Activated CD4-positive, alpha-beta T cell treated with anti-CD3 and anti-CD28 coated beads for 36 hours (primary cell): ENCODE measurements at regions of chr21 and their contacts with region 1.

Region 1: GRCh38 chr21:42227909-42228708 is 9.2 kb downstream of the ABCG1 start:
- DNase-seq: peak; percentile 97
- ATAC-seq: peak; percentile 96
- H3K4me3 Mint-ChIP-seq: peak overlapping the region; percentile 39
- H3K27ac Mint-ChIP-seq: peak overlapping the region; percentile 94
- H3K4me1 Mint-ChIP-seq: peaks cover 80% of the 10 kb centered on the region
- H3K27me3 Mint-ChIP-seq: no peaks in the 10 kb centered on the region

Region 2: GRCh38 chr21:42047821-42048613 is 180.1 kb before region 1 on chr21:
- CTCF ChIA-PET with region 1: no interaction called
- POLR2A ChIA-PET with region 1: no interaction called
- intact Hi-C with region 1: no loop called
- DNase-seq: no peak
- ATAC-seq: no peak
- H3K4me3 Mint-ChIP-seq: no peak overlapping the region
- H3K27ac Mint-ChIP-seq: no peak overlapping the region
- H3K4me1 Mint-ChIP-seq: no peaks in the 10 kb centered on the region
- H3K27me3 Mint-ChIP-seq: no peaks in the 10 kb centered on the region

Region 3: GRCh38 chr21:42187976-42188653 is 40.0 kb before region 1 on chr21:
- CTCF ChIA-PET with region 1: interaction called, 7 read pairs
- POLR2A ChIA-PET with region 1: no interaction called
- intact Hi-C with region 1: loop called (anchors 1 kb)
- DNase-seq: peak; percentile 88
- ATAC-seq: peak; percentile 93
- H3K4me3 Mint-ChIP-seq: peak overlapping the region; percentile 57
- H3K27ac Mint-ChIP-seq: peak overlapping the region; percentile 95
- H3K4me1 Mint-ChIP-seq: peaks cover 65% of the 10 kb centered on the region
- H3K27me3 Mint-ChIP-seq: peaks cover 2% of the 10 kb centered on the region

Region 4: DNA sequence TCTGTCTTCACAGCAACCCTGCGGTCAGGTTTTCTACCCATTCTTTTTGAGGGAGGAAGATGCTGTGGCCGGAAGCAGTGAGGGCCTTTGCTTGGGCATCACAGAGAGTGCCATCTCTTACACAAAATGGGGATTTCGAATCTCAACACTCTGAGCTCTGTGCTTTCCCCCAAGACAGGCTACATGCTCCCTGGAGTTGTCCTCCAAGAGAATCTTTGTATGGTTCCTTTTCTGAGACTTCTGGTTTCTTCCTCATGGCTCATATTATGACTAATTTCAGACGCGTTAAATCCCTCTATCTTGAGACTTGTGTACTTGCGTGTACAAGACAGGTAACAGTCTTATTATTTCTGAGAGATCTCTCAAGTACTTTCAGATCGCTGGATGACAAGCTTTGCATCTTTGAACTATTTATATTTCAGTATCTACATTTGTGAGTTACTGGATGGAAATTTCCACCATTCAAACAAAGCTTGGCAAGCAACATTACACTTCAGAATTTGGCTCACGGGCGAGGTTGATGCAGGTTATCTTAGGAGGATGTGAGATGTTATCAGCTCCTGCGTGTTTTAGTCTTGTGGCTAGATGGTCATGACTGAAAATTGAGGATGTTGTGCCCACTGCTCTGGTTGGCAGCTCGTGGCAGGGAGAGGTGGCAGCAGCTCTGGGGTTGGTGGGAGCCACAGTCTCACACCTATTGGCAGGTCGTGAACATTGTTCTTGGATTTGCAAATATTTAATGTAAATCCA is 10.3 kb after region 1 on chr21:
- CTCF ChIA-PET with region 1: interaction called, 11 read pairs
- POLR2A ChIA-PET with region 1: interaction called, 18 read pairs
- intact Hi-C with region 1: loop called (anchors 1 kb)
- DNase-seq: peak; percentile 61
- ATAC-seq: peak; percentile 7
- H3K4me3 Mint-ChIP-seq: peak overlapping the region; percentile 50
- H3K27ac Mint-ChIP-seq: peak overlapping the region; percentile 92
- H3K4me1 Mint-ChIP-seq: peaks cover 59% of the 10 kb centered on the region
- H3K27me3 Mint-ChIP-seq: no peaks in the 10 kb centered on the region

Region 5: GRCh38 chr21:42286416-42286815 is 58.3 kb after region 1 on chr21:
- CTCF ChIA-PET with region 1: no interaction called
- POLR2A ChIA-PET with region 1: no interaction called
- intact Hi-C with region 1: no loop called
- DNase-seq: no peak
- ATAC-seq: no peak
- H3K4me3 Mint-ChIP-seq: no peak overlapping the region
- H3K27ac Mint-ChIP-seq: peak overlapping the region; percentile 4
- H3K4me1 Mint-ChIP-seq: no peaks in the 10 kb centered on the region
- H3K27me3 Mint-ChIP-seq: no peaks in the 10 kb centered on the region

Region 6: GRCh38 chr21:42467140-42467983 is 239.3 kb after region 1 on chr21:
- CTCF ChIA-PET with region 1: no interaction called
- POLR2A ChIA-PET with region 1: no interaction called
- intact Hi-C with region 1: loop called in 1 of 2 experiments (anchors 5 kb)
- DNase-seq: peak; percentile 43
- ATAC-seq: no peak
- H3K4me3 Mint-ChIP-seq: no peak overlapping the region
- H3K27ac Mint-ChIP-seq: no peak overlapping the region
- H3K4me1 Mint-ChIP-seq: peaks cover 34% of the 10 kb centered on the region
- H3K27me3 Mint-ChIP-seq: no peaks in the 10 kb centered on the region